PC-9 (cell line): ENCODE measurements at regions of chr6 and their contacts with region 1.

Region 1: DNA sequence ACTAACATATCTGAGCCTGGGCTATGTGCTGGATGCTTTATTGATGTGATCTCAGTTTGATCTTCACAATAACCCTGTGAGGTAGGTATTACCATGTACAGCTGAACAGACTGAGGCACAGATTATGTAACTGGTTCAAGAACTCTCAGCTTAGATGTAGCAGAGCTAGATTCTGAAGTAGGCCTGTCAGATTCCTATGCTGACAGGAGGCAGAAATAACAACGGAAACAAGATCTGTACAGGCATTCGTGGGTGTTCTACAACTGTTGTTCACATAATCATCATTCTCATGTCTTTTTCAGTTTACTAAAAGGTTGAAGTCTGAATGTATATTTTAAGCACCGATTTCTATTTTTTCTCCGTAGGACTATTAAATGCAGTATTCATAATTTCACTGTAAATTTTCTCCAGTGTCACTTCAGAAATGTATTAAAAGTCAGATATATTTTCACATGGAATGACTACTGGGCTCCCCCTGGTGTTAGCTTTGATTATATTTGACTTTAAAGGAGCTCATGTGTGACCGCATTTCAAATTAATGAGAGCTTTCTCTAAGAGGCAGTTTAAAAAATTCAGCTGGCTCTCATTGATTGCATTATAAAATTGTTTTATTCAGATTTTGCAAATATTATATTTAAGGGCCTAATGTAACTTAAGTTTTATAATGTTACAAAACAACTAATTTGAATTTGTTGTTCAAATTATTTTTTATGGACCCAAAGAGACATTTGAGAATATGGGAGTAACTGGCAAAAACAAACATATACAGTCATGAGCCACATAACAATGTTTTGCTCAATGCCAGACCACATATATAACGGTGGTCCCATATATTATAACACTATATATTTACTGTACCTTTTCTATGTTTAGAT is 36.4 kb upstream of the SLC17A4 start:
- DNase-seq: no peak
- H3K4me3 ChIP-seq: no peak overlapping the region
- H3K27ac ChIP-seq: no peak overlapping the region
- H3K4me1 ChIP-seq: no peaks in the 10 kb centered on the region
- H3K27me3 ChIP-seq: no peaks in the 10 kb centered on the region
- CTCF ChIP-seq: peak; percentile 83

Region 2: DNA sequence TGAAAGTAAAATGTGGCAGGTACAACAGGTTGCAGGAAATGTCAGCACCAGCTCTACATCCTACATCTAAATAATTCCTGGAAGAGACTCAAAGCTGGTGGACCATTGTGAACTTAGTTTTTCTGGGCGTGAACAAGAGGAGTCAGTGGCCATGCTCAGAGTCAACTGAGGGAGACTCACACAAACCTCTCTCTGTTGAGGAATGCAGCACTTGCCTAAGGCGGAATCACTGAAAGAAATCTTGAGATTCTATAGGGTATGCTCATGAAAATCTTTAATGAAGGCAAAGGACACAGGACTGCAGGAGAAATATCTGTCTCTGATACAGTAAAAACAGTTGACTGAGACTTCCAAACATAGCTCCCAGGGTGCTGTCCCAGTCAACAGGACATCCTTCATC is 58.9 kb after region 1 on chr6:
- CTCF ChIA-PET with region 1: no interaction called
- POLR2A ChIA-PET with region 1: no interaction called
- intact Hi-C with region 1: no loop called
- DNase-seq: peak; percentile 47 to 76
- H3K4me3 ChIP-seq: no peak overlapping the region
- H3K27ac ChIP-seq: no peak overlapping the region
- H3K4me1 ChIP-seq: peaks cover 12% of the 10 kb centered on the region; the same call in 1 of the 2 replicates
- H3K27me3 ChIP-seq: no peaks in the 10 kb centered on the region
- CTCF ChIP-seq: no peak

Region 3: GRCh38 chr6:25942561-25943147 is 224.6 kb after region 1 on chr6:
- CTCF ChIA-PET with region 1: no interaction called
- POLR2A ChIA-PET with region 1: no interaction called
- intact Hi-C with region 1: loop called (anchors 5 kb)
- DNase-seq: no peak
- H3K4me3 ChIP-seq: no peak overlapping the region
- H3K27ac ChIP-seq: no peak overlapping the region
- H3K4me1 ChIP-seq: no peaks in the 10 kb centered on the region
- H3K27me3 ChIP-seq: no peaks in the 10 kb centered on the region
- CTCF ChIP-seq: peak; percentile 61; the same call in 1 of the 2 replicates